Naive thymus-derived CD8-positive, alpha-beta T cell (primary cell): ENCODE measurements at regions of chr11 and their contacts with region 1.

Region 1: GRCh38 chr11:67239783-67240575 is 26.3 kb upstream of the GRK2 start:
- DNase-seq: peak; percentile 87 to 98 (median 96)
- ATAC-seq: peak; percentile 85 to 86
- H3K4me3 Mint-ChIP-seq: peak overlapping the region; percentile 94 to 100 (median 98)
- H3K27ac Mint-ChIP-seq: peak overlapping the region; percentile 97 to 100 (median 100)
- H3K4me1 Mint-ChIP-seq: peaks cover 37 to 61% (median 54%) of the 10 kb centered on the region in 4 donors
- H3K27me3 Mint-ChIP-seq: no peaks in the 10 kb centered on the region

Region 2: DNA sequence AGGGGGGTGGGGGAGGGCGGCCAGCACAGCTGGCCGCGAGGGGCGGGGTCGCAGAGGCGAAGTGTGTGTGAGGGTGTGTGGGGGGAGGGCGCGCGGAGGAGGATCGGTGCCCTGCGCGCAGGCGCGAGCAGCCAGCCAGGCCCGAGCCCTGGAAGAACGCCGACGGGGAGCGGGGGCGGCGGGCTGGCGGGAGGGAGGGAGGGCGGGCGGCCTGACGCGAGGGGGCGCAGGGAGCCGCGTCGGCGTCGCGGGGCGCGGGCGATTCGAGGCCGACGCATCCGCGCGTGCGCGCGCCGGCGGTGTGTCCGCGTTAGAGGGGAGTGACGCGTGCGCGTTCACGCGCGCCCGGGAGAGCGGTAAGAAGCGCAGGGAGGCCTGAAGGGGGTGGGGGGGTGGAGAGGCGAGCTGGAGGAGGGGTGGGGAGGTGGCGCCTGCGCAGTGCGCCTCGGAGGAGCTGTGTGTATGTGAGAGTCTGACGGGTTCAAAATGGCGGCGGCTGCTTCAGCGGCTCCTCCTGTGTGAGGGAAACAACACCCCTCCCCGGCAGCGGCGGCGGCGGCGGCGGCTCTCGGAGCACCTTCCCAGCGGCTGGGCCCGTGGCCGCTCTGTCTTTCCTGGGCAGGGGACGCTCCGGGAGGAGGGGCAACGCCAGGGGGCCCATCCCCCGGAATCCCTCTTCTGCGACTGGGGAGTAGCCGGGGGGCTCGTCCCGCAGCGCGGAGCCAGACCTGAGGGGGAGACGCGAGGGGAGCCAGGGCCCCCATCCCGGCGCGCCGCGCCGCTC is 121.0 kb before region 1 on chr11 and contains the start of gene KDM2A:
- POLR2A ChIA-PET with region 1: interaction called, 30 read pairs
- DNase-seq: peak; percentile 84 to 100 (median 98)
- ATAC-seq: peak; percentile 77 to 82
- H3K4me3 Mint-ChIP-seq: peak within 1 kb of the TSS; percentile 91 to 99 (median 96)
- H3K27ac Mint-ChIP-seq: peak within 1 kb of the TSS; percentile 82 to 97 (median 96)
- H3K4me1 Mint-ChIP-seq: peaks cover 21 to 55% (median 40%) of the 10 kb centered on the region in 4 donors
- H3K27me3 Mint-ChIP-seq: no peaks in the 10 kb centered on the region
- polyA plus RNA-seq, gene KDM2A: 8.0 to 12.9 (median 9.9) TPM

Region 3: GRCh38 chr11:67265633-67266423 is 25.8 kb after region 1 on chr11:
- POLR2A ChIA-PET with region 1: interaction called, 34 read pairs
- DNase-seq: peak; percentile 57 to 84 (median 79)
- ATAC-seq: peak; percentile 43 to 49
- H3K4me3 Mint-ChIP-seq: peak overlapping the region; percentile 74 to 98 (median 81)
- H3K27ac Mint-ChIP-seq: peak overlapping the region; percentile 70 to 90 (median 88)
- H3K4me1 Mint-ChIP-seq: peaks cover 36 to 67% (median 65%) of the 10 kb centered on the region in 4 donors
- H3K27me3 Mint-ChIP-seq: no peaks in the 10 kb centered on the region

Region 4: DNA sequence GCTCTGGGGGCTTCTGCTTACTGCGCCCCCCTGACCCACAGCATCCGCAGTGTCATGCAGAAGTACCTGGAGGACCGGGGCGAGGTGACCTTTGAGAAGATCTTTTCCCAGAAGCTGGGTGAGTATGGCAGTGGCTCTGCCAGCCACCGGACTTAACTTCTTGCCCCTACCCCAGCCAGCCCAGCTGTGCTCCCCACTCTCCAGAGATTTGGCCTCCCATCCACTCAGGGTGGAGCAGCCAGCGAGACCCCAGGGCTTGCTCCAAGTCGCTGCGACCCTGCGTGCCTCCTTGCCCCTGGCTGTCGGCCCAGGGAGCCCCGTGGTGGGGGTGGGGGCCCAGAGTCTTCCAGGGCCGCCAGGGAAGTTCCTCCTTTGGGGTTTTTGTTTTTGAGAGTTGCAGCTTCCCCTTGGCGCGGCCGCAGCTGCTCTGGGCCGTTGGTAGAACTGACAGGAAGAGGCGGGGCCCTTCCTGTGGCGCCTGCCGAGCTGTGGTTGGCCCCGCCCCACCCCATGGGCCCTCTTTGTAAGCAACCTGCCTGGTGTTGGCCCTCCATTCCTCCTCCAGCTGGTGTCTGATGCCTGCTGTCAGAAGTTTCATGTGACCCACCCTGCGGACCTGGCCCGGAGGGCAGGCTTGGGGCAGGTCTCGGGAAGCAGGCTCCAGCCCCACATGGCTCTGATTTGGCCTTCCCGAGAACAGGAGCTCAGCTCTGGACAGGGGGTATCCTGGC is 37.4 kb after region 1 on chr11:
- POLR2A ChIA-PET with region 1: interaction called, 26 read pairs
- DNase-seq: peak; percentile 84 to 95 (median 90)
- ATAC-seq: peak; percentile 89 to 96
- H3K4me3 Mint-ChIP-seq: peak overlapping the region; percentile 74 to 98 (median 86)
- H3K27ac Mint-ChIP-seq: peak overlapping the region; percentile 90 to 100 (median 98)
- H3K4me1 Mint-ChIP-seq: peaks cover 28 to 83% (median 78%) of the 10 kb centered on the region in 4 donors
- H3K27me3 Mint-ChIP-seq: no peaks in the 10 kb centered on the region

Region 5: DNA sequence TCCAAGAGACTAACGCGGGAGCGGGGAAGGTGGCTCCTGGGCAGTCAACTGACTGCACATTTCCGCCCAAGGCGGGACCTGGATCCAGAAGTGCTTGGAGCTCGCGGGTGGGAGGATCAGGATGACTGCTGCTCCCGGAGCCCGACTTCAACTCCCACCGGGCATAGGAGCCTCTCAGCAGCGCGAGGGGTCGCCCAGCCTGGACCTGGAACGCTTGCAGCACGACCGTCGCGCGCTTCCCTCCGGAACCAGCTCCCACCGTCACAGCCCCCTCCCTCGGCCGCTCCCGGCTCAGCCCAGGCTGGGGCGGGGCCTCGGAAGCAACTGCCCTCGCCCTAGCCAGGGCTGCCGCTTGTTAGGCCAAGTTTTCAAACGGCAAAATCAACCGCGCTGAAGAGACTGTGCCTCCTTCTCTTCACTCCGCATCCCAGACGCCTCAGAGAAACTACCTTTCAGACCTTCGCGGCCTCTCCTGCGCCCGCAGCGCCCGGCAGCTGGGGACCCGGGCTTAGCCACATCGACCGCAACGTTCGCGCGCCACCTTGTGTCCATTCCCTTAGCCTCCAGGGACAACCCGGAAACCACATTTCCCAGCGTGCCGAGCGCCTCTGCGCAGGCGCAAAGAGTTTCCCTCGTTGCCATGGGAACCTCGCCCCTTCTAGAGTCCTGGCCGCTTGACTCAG is 77.4 kb after region 1 on chr11:
- POLR2A ChIA-PET with region 1: interaction called, 10 read pairs
- DNase-seq: peak; percentile 92 to 99 (median 98)
- ATAC-seq: peak; percentile 88 to 89
- H3K4me3 Mint-ChIP-seq: peak overlapping the region; percentile 93 to 100 (median 99)
- H3K27ac Mint-ChIP-seq: peak overlapping the region; percentile 89 to 98 (median 96)
- H3K4me1 Mint-ChIP-seq: peaks cover 22 to 54% (median 40%) of the 10 kb centered on the region in 4 donors
- H3K27me3 Mint-ChIP-seq: no peaks in the 10 kb centered on the region

Region 6: DNA sequence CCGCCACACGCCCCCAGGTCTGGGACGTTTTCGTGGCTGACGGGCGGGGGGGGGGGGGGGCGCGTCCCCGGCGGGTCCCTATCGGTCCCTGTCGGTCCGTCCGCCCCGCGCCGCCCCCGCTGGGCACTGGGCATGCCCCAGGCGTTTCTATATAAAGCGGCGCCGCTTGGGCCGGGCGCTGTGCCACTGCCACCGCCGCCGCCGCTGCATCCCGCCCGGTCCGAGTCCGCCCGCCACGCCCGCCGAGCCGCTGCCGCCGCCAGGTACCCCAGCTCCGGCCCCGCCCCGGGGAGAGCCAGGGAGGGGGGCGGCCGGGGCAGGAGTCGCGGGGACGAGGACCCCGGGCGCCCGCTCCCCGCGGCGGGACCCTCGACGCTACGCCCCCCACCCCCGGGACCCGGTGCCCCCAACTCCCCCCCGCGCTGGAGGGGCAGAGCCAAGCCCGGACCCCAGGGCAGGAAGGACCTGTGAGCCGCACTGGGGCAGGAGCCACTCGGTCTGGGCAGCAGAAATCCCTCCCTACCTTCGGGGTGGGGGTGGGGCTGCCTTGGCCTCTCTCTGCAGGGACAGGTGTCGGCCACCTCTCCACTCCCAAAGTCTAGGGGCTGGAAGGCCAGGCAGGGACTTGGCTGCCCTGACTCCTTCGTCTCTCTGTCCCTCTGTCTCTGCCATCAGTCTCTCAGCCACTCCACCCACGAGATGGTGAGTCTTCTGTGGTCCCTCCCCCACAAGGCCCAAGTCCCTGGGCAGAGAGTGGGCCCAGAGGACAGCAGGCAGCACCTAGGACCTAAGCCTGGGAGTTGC is 175.7 kb after region 1 on chr11 and contains the start of gene CARNS1:
- POLR2A ChIA-PET with region 1: no interaction called
- DNase-seq: no peak
- ATAC-seq: no peak
- H3K4me3 Mint-ChIP-seq: peak within 1 kb of the TSS; percentile 84 to 96 (median 93)
- H3K27ac Mint-ChIP-seq: peak within 1 kb of the TSS; percentile 83 to 100 (median 98)
- H3K4me1 Mint-ChIP-seq: peaks cover 34 to 87% (median 78%) of the 10 kb centered on the region in 4 donors
- H3K27me3 Mint-ChIP-seq: no peaks in the 10 kb centered on the region
- polyA plus RNA-seq, gene CARNS1: 2.2 to 3.7 (median 2.3) TPM